A549 (cell line): ENCODE measurements at regions of chr19 and their contacts with region 1.

Region 1: DNA sequence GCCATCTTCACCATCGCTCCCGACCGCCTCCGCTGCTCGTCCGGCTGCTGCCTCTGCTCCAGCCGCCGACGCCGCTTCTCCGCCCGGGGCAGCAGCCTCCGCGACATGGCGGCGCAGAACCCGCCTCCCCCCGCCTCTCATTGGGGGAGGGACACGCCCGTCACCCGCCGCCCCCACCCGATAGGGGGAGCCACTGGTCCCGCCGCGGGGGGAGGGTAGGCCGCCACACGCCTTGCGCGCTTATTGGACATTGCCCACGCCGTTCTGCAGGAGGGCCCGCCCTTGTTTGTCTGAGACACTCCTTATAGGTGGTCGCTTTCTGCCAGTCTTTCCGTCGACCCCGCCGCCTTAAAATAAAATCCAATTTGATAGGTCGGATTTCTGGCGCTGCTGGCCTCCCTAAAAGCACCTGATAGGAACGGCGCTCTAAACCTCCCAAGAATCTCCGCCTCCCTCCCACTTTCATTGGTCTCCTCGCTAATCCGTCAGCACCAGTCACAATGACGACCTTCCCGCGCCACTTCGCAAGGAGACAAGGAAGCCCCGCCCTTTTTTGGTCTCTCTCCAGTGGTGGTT is at the start of gene HNRNPL:
- DNase-seq: no peak
- ATAC-seq: peak; percentile 60 to 79
- H3K4me3 ChIP-seq: peak within 1 kb of the TSS; percentile 69
- H3K27ac ChIP-seq: peak within 1 kb of the TSS; percentile 93 to 96
- H3K4me1 ChIP-seq: peaks cover 44% of the 10 kb centered on the region
- CTCF ChIP-seq: peak; percentile 40; the same call in 2 of the 3 replicates
- EP300 ChIP-seq: no peak
- POLR2A ChIP-seq: peak; percentile 90
- RAD21 ChIP-seq: no peak; a peak in 1 of 5 replicates
- polyA plus RNA-seq, gene HNRNPL: 440 and 487 TPM in 2 replicates

Region 2: GRCh38 chr19:38618590-38619360 is 231.2 kb before region 1 on chr19 and contains the start of gene EIF3K:
- CTCF ChIA-PET with region 1: no interaction called
- POLR2A ChIA-PET with region 1: interaction called, 14 read pairs
- DNase-seq: peak; percentile 100
- ATAC-seq: peak; percentile 87 to 93
- H3K4me3 ChIP-seq: peak within 1 kb of the TSS; percentile 86
- H3K27ac ChIP-seq: peak within 1 kb of the TSS; percentile 84 to 87
- H3K4me1 ChIP-seq: peaks cover 14% of the 10 kb centered on the region
- CTCF ChIP-seq: no peak
- EP300 ChIP-seq: no peak
- POLR2A ChIP-seq: peak; percentile 85
- RAD21 ChIP-seq: peak in 1 of 2 experiments; percentile 10; a peak in 1 of 5 replicates
- polyA plus RNA-seq, gene EIF3K: 419 and 491 TPM in 2 replicates

Region 3: DNA sequence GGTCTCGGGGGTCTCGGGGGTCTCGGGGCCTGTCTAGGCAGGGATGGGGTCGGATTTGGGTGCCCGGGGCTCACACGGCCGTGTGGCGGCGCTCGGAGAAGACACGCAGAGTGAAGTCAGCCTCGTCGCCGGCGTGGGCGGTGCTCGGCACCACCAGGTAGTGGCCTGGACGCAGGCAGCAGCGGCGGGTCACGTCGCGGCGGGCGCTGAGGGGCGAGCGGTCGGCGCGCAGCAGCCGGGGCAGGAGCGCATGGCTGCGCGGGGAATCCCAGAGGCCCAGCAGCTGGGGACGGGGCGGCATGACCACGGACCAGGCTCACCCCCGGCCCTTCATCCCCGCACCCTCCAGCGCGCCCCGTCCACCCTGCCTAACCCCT is 113.9 kb before region 1 on chr19:
- CTCF ChIA-PET with region 1: interaction called, 4 read pairs
- POLR2A ChIA-PET with region 1: interaction called, 10 read pairs
- DNase-seq: peak; percentile 80 to 81
- ATAC-seq: peak; percentile 11 to 53
- H3K4me3 ChIP-seq: peak overlapping the region; percentile 49
- H3K27ac ChIP-seq: peak overlapping the region; percentile 70 to 88
- H3K4me1 ChIP-seq: peaks cover 57% of the 10 kb centered on the region
- CTCF ChIP-seq: 0 out of 3 replicates have a peak, but pooled peaks have one; percentile 12
- EP300 ChIP-seq: no peak
- POLR2A ChIP-seq: peak; percentile 43; the same call in 1 of the 2 replicates
- RAD21 ChIP-seq: peak; percentile 13 to 43; a peak in 4 of 5 replicates

Region 4: DNA sequence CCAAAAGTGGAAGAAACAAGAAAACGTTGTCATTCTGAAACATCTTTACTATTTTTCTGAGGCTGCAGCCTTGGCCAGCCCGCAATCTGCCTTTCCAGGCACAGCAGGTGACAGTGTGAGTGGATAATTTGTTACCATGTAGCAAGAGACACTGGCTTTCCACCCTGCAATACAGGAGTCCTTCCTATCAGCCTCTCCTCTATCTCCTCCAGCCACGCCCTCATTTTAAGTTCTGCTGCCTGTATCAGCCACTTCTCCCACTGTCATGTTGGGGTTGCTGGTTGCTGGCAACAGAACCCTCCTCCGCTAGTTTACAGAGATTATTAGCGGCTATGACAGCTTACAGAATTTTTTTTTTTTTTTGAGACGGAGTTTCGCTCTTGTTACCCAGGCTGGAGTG is 68.9 kb before region 1 on chr19:
- CTCF ChIA-PET with region 1: no interaction called
- POLR2A ChIA-PET with region 1: no interaction called
- DNase-seq: no peak
- ATAC-seq: peak; percentile 57 to 63; a peak in 5 of 6 replicates
- H3K4me3 ChIP-seq: no peak overlapping the region
- H3K27ac ChIP-seq: no peak overlapping the region
- H3K4me1 ChIP-seq: peaks cover 10% of the 10 kb centered on the region
- CTCF ChIP-seq: no peak
- EP300 ChIP-seq: no peak
- POLR2A ChIP-seq: no peak
- RAD21 ChIP-seq: no peak

Region 5: GRCh38 chr19:38831142-38831605 is 18.8 kb before region 1 on chr19:
- CTCF ChIA-PET with region 1: interaction called, 17 read pairs
- POLR2A ChIA-PET with region 1: interaction called, 62 read pairs
- DNase-seq: peak; percentile 73 to 78
- ATAC-seq: peak; percentile 57 to 58
- H3K4me3 ChIP-seq: peak overlapping the region; percentile 55
- H3K27ac ChIP-seq: peak overlapping the region; percentile 88
- H3K4me1 ChIP-seq: peaks cover 49% of the 10 kb centered on the region
- CTCF ChIP-seq: no peak
- EP300 ChIP-seq: no peak
- POLR2A ChIP-seq: no peak
- RAD21 ChIP-seq: no peak

Region 6: GRCh38 chr19:38862321-38863059 is 12.5 kb after region 1 on chr19:
- CTCF ChIA-PET with region 1: interaction called, 24 read pairs
- POLR2A ChIA-PET with region 1: interaction called, 26 read pairs
- DNase-seq: peak in 1 of 2 experiments; percentile 79
- ATAC-seq: peak; percentile 49 to 51; a peak in 4 of 6 replicates
- H3K4me3 ChIP-seq: no peak overlapping the region
- H3K27ac ChIP-seq: peak overlapping the region; percentile 16 to 42; a peak in 5 of 6 replicates
- H3K4me1 ChIP-seq: peaks cover 28% of the 10 kb centered on the region
- CTCF ChIP-seq: no peak
- EP300 ChIP-seq: no peak
- POLR2A ChIP-seq: no peak
- RAD21 ChIP-seq: no peak

Region 7: GRCh38 chr19:38877781-38878574 is 28.0 kb after region 1 on chr19 and contains the start of gene RINL:
- CTCF ChIA-PET with region 1: interaction called, 11 read pairs
- POLR2A ChIA-PET with region 1: interaction called, 3 read pairs
- DNase-seq: no peak
- ATAC-seq: peak; percentile 17 to 20; a peak in 4 of 6 replicates
- H3K4me3 ChIP-seq: no peak within 1 kb of the TSS
- H3K27ac ChIP-seq: peak within 1 kb of the TSS; percentile 28 to 63
- H3K4me1 ChIP-seq: peaks cover 4% of the 10 kb centered on the region; the same call in 2 of the 3 replicates
- CTCF ChIP-seq: no peak
- EP300 ChIP-seq: no peak
- POLR2A ChIP-seq: no peak
- RAD21 ChIP-seq: no peak
- polyA plus RNA-seq, gene RINL: 6.3 and 6.6 TPM in 2 replicates

Region 8: GRCh38 chr19:38899447-38900219 is 49.7 kb after region 1 on chr19 and contains the starts of genes NFKBIB and SIRT2:
- CTCF ChIA-PET with region 1: interaction called, 5 read pairs
- POLR2A ChIA-PET with region 1: interaction called, 13 read pairs
- DNase-seq: peak; percentile 100
- ATAC-seq: peak; percentile 92 to 97
- H3K4me3 ChIP-seq: peak within 1 kb of the TSS; percentile 56
- H3K27ac ChIP-seq: peak within 1 kb of the TSS; percentile 76 to 85
- H3K4me1 ChIP-seq: peaks cover 17% of the 10 kb centered on the region
- CTCF ChIP-seq: no peak
- EP300 ChIP-seq: no peak
- POLR2A ChIP-seq: peak; percentile 63
- RAD21 ChIP-seq: no peak
- polyA plus RNA-seq, gene NFKBIB: 25.6 and 35.0 TPM in 2 replicates
- polyA plus RNA-seq, gene SIRT2: 28.6 and 31.5 TPM in 2 replicates

Region 9: DNA sequence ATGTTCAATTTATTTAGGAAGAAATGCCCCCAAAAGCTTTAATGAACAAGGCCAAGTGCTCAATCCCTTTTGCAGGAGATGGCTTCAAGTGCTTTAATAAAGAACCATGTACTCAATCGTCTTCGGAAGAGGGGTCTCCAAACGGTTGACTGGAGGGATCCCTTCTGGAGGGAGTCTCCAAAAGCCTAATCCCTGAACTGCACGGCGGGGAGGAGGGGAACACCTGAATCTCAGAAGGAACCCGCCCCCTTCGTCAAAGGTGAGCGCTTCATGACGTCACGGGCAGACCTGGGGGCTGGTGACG is 540.5 kb after region 1 on chr19:
- CTCF ChIA-PET with region 1: no interaction called
- POLR2A ChIA-PET with region 1: no interaction called
- DNase-seq: peak in 1 of 2 experiments; percentile 96
- ATAC-seq: no peak; a peak in 1 of 6 replicates
- H3K4me3 ChIP-seq: peak overlapping the region; percentile 68
- H3K27ac ChIP-seq: peak overlapping the region; percentile 89 to 90
- H3K4me1 ChIP-seq: peaks cover 15% of the 10 kb centered on the region; the same call in 2 of the 3 replicates
- CTCF ChIP-seq: no peak
- EP300 ChIP-seq: no peak
- POLR2A ChIP-seq: no peak
- RAD21 ChIP-seq: no peak